ENCODE measurements at regions of chr1 and their contacts with region 1.

Region 1: DNA sequence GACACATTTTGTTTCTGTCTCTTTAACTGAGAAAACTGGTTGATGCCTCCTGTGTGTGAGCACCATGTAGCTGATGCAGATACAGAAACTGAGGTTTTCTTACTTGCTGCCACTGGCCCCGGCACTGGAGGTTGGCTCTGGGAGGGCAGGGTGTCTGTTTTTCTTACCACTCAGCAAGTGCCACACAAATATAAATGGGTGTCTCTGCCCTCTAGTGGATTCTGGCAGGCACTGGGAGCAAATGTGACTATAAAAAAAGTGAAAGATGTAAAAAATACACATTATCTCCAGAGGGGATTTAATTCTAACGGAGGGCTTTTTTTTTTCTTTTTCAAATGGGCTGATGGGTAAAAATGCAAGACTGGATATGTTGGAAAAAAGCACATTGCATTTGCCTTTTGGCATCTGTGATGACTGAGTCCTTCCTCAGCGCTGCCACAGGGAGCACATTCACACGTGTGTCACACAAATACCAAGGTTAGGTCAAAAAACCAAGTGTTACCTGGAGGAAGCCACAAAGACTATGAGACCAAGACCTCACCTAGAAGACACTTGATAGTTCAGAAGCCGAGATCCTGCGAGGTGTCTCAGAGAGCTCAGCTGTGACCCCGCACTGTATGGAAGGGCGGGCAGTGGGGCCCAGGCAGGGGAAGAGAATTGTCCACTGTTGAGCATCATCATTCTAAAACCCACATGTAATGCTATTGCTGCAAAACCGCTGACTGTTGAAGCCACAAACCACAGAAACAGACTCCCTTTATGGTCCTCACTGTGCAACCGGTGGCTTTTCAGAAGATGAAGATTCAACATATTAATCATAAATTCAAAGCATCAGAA is 18.9 kb downstream of the PGBD2 start:
- DNase-seq: peak; percentile 85
- H3K4me3 Mint-ChIP-seq: no peak overlapping the region
- H3K27ac Mint-ChIP-seq: no peak overlapping the region
- H3K4me1 Mint-ChIP-seq: peaks cover 20% of the 10 kb centered on the region
- H3K27me3 Mint-ChIP-seq: no peaks in the 10 kb centered on the region
- CTCF ChIP-seq: peak; percentile 89

Region 2: DNA sequence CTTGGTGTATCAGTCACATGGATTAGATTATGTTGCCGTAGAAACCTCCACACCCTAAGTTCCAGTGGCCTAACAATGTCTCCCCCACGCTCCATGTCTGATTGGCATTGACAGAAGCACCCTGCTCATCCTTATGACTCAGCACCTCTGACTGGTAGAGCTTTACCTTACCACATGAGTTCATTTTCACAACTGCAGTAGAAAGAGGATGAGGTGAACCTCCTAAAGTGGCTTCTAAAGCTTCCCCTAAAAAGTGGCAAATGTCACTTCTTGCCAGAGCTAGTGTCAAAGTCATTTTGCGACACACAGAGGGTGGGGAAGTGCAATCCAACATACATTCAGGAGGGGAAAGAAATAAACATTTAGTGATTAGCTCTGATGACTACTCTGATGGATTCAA is 138.8 kb before region 1 on chr1:
- CTCF ChIA-PET with region 1: no interaction called
- POLR2A ChIA-PET with region 1: no interaction called
- intact Hi-C with region 1: no loop called
- DNase-seq: peak; percentile 43
- H3K4me3 Mint-ChIP-seq: no peak overlapping the region
- H3K27ac Mint-ChIP-seq: no peak overlapping the region
- H3K4me1 Mint-ChIP-seq: peaks cover 5% of the 10 kb centered on the region
- H3K27me3 Mint-ChIP-seq: no peaks in the 10 kb centered on the region
- CTCF ChIP-seq: no peak

Region 3: GRCh38 chr1:248798791-248799190 is 126.1 kb before region 1 on chr1:
- CTCF ChIA-PET with region 1: no interaction called
- POLR2A ChIA-PET with region 1: no interaction called
- intact Hi-C with region 1: no loop called
- DNase-seq: no peak
- H3K4me3 Mint-ChIP-seq: no peak overlapping the region
- H3K27ac Mint-ChIP-seq: no peak overlapping the region
- H3K4me1 Mint-ChIP-seq: no peaks in the 10 kb centered on the region
- H3K27me3 Mint-ChIP-seq: peaks cover 45% of the 10 kb centered on the region
- CTCF ChIP-seq: no peak

Region 4: DNA sequence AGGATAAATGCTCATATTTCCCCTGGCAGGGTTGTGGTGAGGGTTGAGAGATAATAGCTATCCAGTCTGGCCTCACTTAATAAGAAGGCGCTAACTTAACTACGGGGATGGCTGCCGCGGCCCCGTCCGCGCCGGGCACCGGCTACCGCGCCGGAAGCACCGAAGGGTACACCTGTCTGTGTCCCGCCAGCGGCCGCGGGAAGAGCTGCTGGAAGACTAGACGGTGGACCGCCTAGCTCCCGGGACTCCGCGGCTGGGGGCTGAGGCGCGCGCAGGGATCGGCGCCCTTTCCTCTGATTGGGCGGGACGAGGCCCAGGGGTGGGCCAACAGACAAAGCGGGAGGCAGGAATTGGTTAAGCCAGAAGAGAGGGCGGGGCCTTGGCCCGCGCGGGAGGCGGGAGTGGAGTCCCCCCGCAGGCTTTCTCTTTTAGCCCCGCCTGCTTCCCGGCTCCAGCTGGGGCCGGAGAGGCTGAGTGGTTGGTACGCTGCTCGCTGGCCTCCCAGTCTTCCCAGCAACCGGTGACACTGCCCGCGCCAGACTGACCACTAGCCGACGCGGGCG is 87.0 kb before region 1 on chr1 and contains the start of gene ZNF672:
- CTCF ChIA-PET with region 1: interaction called, 12 read pairs
- POLR2A ChIA-PET with region 1: interaction called, 5 read pairs
- intact Hi-C with region 1: no loop called
- DNase-seq: peak; percentile 100
- H3K4me3 Mint-ChIP-seq: no peak within 1 kb of the TSS
- H3K27ac Mint-ChIP-seq: no peak within 1 kb of the TSS
- H3K4me1 Mint-ChIP-seq: peaks cover 20% of the 10 kb centered on the region
- H3K27me3 Mint-ChIP-seq: no peaks in the 10 kb centered on the region
- CTCF ChIP-seq: no peak
- total RNA-seq, gene ZNF672: 35.8 and 36.2 TPM in 2 replicates

Region 5: DNA sequence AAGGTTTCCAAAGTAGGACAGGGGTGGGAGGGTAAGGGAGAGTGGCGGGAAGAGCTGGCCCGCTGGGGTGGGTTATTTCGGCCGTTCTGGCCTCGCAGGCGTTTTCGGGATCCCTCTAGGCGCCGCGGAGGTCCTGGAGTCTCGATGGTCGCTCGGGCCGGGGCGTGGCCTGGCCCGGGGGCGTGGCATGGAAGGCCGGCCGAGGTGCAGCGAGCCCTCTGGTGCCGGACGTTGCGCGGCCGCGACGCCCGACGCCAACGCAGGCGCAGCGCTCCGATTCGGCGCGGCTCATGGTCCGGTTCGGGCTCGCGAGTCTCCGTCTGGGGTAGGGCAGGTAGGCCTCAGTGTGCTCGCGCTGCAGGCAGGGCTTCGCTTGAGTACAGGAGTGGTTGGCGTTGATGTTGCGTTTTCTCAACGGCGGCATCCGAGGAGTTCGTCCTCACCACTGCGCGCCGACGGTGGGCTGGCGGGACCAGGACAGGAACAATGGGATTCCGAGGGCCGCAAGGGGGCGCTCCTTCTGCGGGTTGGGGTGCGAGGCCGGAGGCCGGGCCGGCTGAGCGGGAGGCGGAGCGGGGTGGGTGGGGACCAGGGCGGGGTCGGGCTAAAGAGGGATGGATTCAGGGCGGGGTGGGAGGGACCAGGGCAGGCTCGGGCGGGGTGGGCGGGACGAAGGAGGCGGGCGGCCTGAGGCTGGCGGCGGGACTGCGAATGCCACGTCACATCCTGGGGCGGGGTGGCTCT is 18.7 kb before region 1 on chr1 and contains the start of gene PGBD2:
- CTCF ChIA-PET with region 1: interaction called, 10 read pairs
- POLR2A ChIA-PET with region 1: no interaction called
- intact Hi-C with region 1: loop called (anchors 1 kb)
- DNase-seq: peak; percentile 96
- H3K4me3 Mint-ChIP-seq: peak within 1 kb of the TSS; percentile 89
- H3K27ac Mint-ChIP-seq: peak within 1 kb of the TSS; percentile 91
- H3K4me1 Mint-ChIP-seq: peaks cover 27% of the 10 kb centered on the region
- H3K27me3 Mint-ChIP-seq: peaks cover 39% of the 10 kb centered on the region
- CTCF ChIP-seq: peak; percentile 86
- total RNA-seq, gene PGBD2: 5.2 and 5.9 TPM in 2 replicates

Region 6: GRCh38 chr1:248914796-248915381 is 10.0 kb before region 1 on chr1:
- CTCF ChIA-PET with region 1: interaction called, 46 read pairs
- POLR2A ChIA-PET with region 1: no interaction called
- intact Hi-C with region 1: no loop called
- DNase-seq: no peak
- H3K4me3 Mint-ChIP-seq: no peak overlapping the region
- H3K27ac Mint-ChIP-seq: no peak overlapping the region
- H3K4me1 Mint-ChIP-seq: no peaks in the 10 kb centered on the region
- H3K27me3 Mint-ChIP-seq: no peaks in the 10 kb centered on the region
- CTCF ChIP-seq: no peak